ENCODE measurements at regions of chrX and their contacts with region 1.

Region 1: GRCh38 chrX:318739-319578 is at the start of gene GTPBP6:
- DNase-seq: peak; percentile 100
- H3K4me3 ChIP-seq: peak within 1 kb of the TSS; percentile 66 to 89 (median 84)
- H3K27ac ChIP-seq: peak within 1 kb of the TSS; percentile 84
- H3K4me1 ChIP-seq: peaks cover 5% of the 10 kb centered on the region
- H3K27me3 ChIP-seq: no peaks in the 10 kb centered on the region
- CTCF ChIP-seq: peak in 1 of 2 donors; percentile 20
- POLR2A ChIP-seq: peak; percentile 78
- total RNA-seq, gene GTPBP6: 62.1 and 63.5 TPM in 2 replicates

Region 2: DNA sequence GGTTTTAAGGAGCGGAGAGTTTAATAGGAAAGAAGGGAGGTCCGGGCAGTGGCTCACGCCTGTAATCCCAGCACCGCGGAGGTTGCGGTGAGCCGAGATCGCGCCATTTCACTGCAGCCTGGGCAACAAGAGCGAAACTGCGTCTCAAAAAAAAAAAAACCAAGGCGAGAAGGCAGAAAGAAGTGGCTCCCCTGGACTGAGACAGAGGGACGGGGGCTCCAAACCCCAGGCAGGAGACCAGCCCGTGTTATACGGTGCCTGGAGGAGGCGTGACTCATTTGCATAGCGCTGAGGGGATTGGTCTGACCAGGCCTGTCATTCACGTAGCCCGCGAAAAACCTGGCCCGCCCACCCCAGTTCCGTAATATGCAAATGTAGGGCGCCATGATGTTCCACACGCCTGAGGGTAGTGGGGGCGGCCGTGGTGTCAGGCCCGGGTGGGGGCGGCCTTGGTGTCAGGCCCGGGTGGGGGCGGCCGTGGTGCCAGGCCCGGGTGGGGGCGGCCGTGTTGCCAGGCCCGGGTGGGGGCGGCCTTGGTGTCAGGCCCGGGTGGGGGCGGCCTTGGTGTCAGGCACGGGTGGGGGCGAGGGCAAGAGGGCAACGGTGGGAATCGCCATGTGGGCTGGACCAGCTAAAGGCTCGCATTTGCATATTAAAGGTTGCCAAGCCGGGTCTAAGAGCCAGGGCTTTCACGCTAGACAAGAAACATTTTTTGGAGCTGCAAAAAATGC is 35.7 kb before region 1 on chrX:
- CTCF ChIA-PET with region 1: no interaction called
- POLR2A ChIA-PET with region 1: no interaction called
- dilution Hi-C with region 1: no loop called
- intact Hi-C with region 1: loop called (anchors 1 kb)
- DNase-seq: peak; percentile 89
- H3K4me3 ChIP-seq: peak overlapping the region; percentile 43 to 82 (median 79)
- H3K27ac ChIP-seq: peak overlapping the region; percentile 60
- H3K4me1 ChIP-seq: no peaks in the 10 kb centered on the region
- H3K27me3 ChIP-seq: no peaks in the 10 kb centered on the region
- CTCF ChIP-seq: no peak
- POLR2A ChIP-seq: peak; percentile 48

Region 3: GRCh38 chrX:386768-387575 is 68.0 kb after region 1 on chrX and contains the start of gene PPP2R3B:
- CTCF ChIA-PET with region 1: no interaction called
- POLR2A ChIA-PET with region 1: no interaction called
- dilution Hi-C with region 1: no loop called
- intact Hi-C with region 1: loop called (anchors 1 kb)
- DNase-seq: peak; percentile 99
- H3K4me3 ChIP-seq: peak within 1 kb of the TSS; percentile 74 to 99 (median 79)
- H3K27ac ChIP-seq: peak within 1 kb of the TSS; percentile 98
- H3K4me1 ChIP-seq: no peaks in the 10 kb centered on the region
- H3K27me3 ChIP-seq: no peaks in the 10 kb centered on the region
- CTCF ChIP-seq: no peak
- POLR2A ChIP-seq: peak; percentile 77
- total RNA-seq, gene PPP2R3B: 29.2 and 33.6 TPM in 2 replicates